ENCODE measurements at regions of chr10 and their contacts with region 1.

Region 1: DNA sequence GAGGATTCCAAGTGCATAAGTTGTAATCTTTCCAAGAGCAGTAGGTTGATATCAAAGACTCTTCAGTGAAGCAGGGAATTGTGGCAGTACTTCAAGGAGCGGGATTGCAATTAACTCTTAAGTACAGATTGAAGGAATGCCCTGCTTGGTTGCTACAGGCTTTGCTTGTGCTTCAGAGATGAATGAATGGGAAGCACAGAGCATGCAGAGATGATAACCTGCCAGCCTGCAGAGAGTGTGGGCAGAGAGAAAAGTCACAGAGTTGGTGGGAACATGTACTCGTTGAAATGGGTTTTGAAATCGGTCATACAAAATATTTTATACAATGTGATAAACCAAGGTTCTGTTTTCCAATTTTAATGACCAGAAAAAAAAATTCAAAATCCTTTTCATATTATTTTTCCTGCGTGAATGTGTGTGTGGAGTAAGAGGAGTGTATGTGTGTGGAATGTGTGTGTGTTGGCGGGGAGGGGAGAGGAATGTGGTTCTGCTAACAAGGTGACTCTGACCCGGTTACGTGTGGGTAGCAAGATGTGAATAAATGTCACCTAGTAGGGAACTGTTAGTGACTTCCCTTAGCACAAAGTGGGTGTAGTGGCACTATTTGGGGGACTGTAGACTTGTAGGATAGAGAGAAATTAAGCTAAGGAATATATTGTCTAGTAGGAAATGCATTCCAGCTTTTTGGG is 697.8 kb downstream of the GATA3 start:
- DNase-seq: no peak
- ATAC-seq: no peak
- H3K4me3 ChIP-seq: no peak overlapping the region
- H3K27ac ChIP-seq: no peak overlapping the region
- H3K4me1 ChIP-seq: no peaks in the 10 kb centered on the region
- H3K27me3 ChIP-seq: no peaks in the 10 kb centered on the region
- CTCF ChIP-seq: no peak

Region 2: GRCh38 chr10:8489823-8490222 is 262.5 kb before region 1 on chr10:
- CTCF ChIA-PET with region 1: no interaction called
- POLR2A ChIA-PET with region 1: no interaction called
- in situ Hi-C with region 1: no loop called
- intact Hi-C with region 1: loop called (anchors 5 kb)
- DNase-seq: no peak
- ATAC-seq: no peak
- H3K4me3 ChIP-seq: no peak overlapping the region
- H3K27ac ChIP-seq: no peak overlapping the region
- H3K4me1 ChIP-seq: no peaks in the 10 kb centered on the region
- H3K27me3 ChIP-seq: no peaks in the 10 kb centered on the region
- CTCF ChIP-seq: no peak

Region 3: DNA sequence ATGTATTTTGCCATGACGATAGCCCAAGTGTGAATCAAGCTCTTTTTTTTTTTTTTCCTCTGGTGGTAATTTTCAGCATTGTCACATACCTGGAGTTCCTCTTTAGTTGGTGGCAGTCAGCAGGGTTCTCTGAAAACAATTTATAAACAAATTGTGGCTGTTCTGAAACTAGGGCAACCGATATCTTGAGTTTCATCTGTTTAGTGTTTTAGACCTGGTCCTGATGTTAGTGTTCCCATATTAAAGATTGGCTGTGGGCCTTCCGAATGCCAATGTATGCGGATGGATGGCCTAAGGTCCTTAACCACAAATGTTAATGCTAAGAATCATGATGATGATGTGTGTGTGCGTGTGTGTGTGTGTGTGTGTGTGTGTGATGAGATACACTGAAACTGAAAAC is 15.3 kb after region 1 on chr10:
- CTCF ChIA-PET with region 1: no interaction called
- POLR2A ChIA-PET with region 1: no interaction called
- in situ Hi-C with region 1: no loop called
- intact Hi-C with region 1: no loop called
- DNase-seq: no peak
- ATAC-seq: no peak
- H3K4me3 ChIP-seq: no peak overlapping the region
- H3K27ac ChIP-seq: no peak overlapping the region
- H3K4me1 ChIP-seq: no peaks in the 10 kb centered on the region
- H3K27me3 ChIP-seq: no peaks in the 10 kb centered on the region
- CTCF ChIP-seq: no peak

Region 4: DNA sequence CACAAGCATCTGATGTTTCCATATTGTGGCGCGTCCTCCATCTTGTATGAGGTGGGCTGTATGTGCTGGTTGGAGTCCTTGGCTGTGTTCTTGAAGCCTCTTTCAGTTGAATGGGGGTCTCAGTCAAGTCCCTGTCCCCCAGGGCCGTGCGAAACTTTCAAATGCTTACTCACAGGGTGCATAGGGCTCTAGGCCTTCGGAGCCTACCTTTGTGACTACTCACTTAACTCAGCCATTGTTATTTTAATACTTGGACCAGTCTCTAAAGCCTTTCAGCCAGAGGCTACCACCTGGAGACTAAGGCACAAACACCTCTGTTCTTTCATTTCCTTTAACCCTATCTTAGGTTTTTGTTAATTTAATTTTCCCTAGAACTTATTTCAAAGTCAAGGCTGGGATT is 88.1 kb after region 1 on chr10:
- CTCF ChIA-PET with region 1: no interaction called
- POLR2A ChIA-PET with region 1: no interaction called
- in situ Hi-C with region 1: no loop called
- intact Hi-C with region 1: no loop called
- DNase-seq: no peak
- ATAC-seq: no peak
- H3K4me3 ChIP-seq: no peak overlapping the region
- H3K27ac ChIP-seq: no peak overlapping the region
- H3K4me1 ChIP-seq: no peaks in the 10 kb centered on the region
- H3K27me3 ChIP-seq: no peaks in the 10 kb centered on the region
- CTCF ChIP-seq: no peak

Measured in Panc1 (cell line).